BJ (cell line): ENCODE measurements at regions of chr11 and their contacts with region 1.

Region 1: DNA sequence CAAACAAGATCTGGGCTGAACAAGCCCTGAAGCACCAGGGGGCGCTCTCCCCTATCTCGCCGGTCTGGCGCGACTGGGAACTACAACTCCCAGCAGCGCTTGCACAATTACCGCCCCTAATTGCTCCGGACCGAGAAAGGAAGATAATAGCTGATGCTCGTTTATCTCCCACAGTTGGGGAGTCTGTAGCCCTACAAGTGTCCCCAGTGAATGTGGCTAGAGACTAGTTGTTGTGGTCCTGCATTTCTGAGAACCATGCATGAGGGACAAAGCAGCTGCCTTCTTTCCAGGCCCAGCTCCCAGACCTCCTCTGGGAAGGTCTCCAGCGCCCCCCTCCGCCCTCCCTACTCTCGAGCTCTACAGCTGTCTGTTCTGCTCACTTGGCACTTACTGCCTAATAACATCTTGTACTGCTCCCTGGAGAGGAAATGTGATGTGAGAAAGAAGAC is 34.4 kb downstream of the NRXN2 start:
- DNase-seq: peak; percentile 17
- H3K4me3 ChIP-seq: peak overlapping the region; percentile 36
- H3K27me3 ChIP-seq: peaks cover 27% of the 10 kb centered on the region
- CTCF ChIP-seq: peak; percentile 86

Region 2: GRCh38 chr11:64659417-64660144 is 29.0 kb before region 1 on chr11:
- CTCF ChIA-PET with region 1: interaction called, 19 read pairs
- POLR2A ChIA-PET with region 1: no interaction called
- DNase-seq: peak; percentile 84
- H3K4me3 ChIP-seq: no peak overlapping the region
- H3K27me3 ChIP-seq: 0 out of 2 replicates have a peak, but pooled peaks cover under 1% of the 10 kb centered on the region
- CTCF ChIP-seq: no peak

Region 3: GRCh38 chr11:64675450-64676260 is 12.9 kb before region 1 on chr11:
- CTCF ChIA-PET with region 1: interaction called, 36 read pairs
- POLR2A ChIA-PET with region 1: no interaction called
- DNase-seq: no peak
- H3K4me3 ChIP-seq: no peak overlapping the region
- H3K27me3 ChIP-seq: peaks cover 35% of the 10 kb centered on the region
- CTCF ChIP-seq: no peak

Region 4: DNA sequence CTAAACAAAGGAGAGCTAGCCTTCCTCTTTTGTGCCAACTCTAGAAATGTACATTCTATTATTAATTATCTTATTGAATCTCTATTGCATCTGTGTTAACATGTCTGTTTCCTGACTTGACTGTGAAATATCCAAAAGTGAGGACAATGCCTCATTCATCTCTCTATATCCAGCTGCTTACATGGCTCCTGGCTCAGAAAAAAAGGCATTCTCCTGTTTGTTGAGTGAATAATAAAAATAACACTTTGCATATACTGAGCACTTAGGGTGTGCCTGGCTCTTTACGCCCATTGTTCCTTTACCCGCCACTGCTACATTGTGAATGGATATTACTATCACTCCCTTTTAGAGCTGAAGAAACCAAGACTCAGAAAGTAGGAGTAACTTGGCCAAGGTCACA is 14.5 kb after region 1 on chr11:
- CTCF ChIA-PET with region 1: interaction called, 29 read pairs
- POLR2A ChIA-PET with region 1: interaction called, 5 read pairs
- DNase-seq: no peak
- H3K4me3 ChIP-seq: no peak overlapping the region
- H3K27me3 ChIP-seq: peaks cover 17% of the 10 kb centered on the region
- CTCF ChIP-seq: no peak

Region 5: GRCh38 chr11:64716473-64717267 is 28.1 kb after region 1 on chr11:
- CTCF ChIA-PET with region 1: interaction called, 13 read pairs
- POLR2A ChIA-PET with region 1: no interaction called
- DNase-seq: no peak
- H3K4me3 ChIP-seq: no peak overlapping the region
- H3K27me3 ChIP-seq: peaks cover 58% of the 10 kb centered on the region
- CTCF ChIP-seq: no peak

Region 6: DNA sequence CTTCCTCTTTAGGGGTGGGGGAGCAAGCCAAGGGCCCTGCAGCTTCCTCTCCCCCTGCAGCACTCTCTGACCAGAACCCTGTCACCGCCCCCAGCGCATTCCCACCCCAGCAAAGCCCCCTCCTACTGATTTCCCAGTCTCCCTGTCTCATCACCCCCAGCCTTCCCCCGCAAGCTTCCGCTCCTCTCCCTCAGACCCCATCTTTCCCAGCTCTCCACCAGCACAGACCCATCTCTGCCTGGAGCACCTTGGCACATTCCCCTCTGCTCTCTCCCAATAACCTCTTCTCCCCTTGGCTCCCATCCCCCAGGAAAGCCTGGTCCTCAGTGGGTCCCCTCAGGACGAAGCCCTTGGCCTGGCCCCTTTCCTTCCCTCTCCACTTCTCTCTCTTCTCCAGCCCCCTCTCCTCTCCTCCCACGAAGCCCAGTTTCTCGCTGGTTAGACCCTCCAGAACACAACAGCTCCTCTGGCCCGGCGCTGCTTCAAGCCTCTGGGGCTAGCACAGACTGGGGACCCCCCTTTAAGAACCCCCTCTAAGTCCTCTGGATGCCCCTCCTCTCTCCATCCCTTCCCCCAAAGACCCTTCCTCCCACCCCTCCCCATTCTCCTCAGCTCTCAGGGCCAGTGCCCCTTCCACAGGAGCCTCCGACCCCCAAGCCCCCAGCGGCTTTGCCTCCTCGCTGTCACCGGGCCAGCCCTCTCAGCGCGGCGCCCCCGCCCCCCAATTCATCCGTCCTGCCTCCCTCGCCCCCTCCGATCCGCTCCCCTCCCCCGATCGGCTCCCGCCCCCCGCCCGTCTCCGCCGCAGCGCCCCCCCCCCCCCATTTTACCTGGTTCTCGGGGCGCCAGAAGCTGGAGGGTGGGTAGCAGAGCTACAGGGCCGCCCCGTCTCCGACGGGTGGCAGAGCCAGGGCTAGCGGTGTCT is 33.8 kb after region 1 on chr11:
- CTCF ChIA-PET with region 1: interaction called, 13 read pairs
- POLR2A ChIA-PET with region 1: no interaction called
- DNase-seq: no peak
- H3K4me3 ChIP-seq: no peak overlapping the region
- H3K27me3 ChIP-seq: peaks cover 45% of the 10 kb centered on the region
- CTCF ChIP-seq: no peak

Region 7: GRCh38 chr11:64742889-64743590 is 54.5 kb after region 1 on chr11:
- CTCF ChIA-PET with region 1: interaction called, 14 read pairs
- POLR2A ChIA-PET with region 1: no interaction called
- DNase-seq: no peak
- H3K4me3 ChIP-seq: peak overlapping the region; percentile 52
- H3K27me3 ChIP-seq: peaks cover 38% of the 10 kb centered on the region
- CTCF ChIP-seq: peak; percentile 73

Region 8: GRCh38 chr11:64803163-64803845 is 114.7 kb after region 1 on chr11 and contains the start of gene MAP4K2:
- CTCF ChIA-PET with region 1: no interaction called
- POLR2A ChIA-PET with region 1: no interaction called
- DNase-seq: no peak
- H3K4me3 ChIP-seq: peak within 1 kb of the TSS; percentile 52
- H3K27me3 ChIP-seq: no peaks in the 10 kb centered on the region
- CTCF ChIP-seq: 0 out of 2 replicates have a peak, but pooled peaks have one; percentile 7
- polyA plus RNA-seq, gene MAP4K2: 9.4 and 22.4 TPM in 2 replicates